Natural killer cell (primary cell): ENCODE measurements at regions of chr2 and their contacts with region 1.

Region 1: GRCh38 chr2:156332534-156333273 is at the start of gene NR4A2:
- DNase-seq: peak; percentile 89 to 98
- ATAC-seq: peak; percentile 53 to 80 (median 65)
- H3K4me3 ChIP-seq: peak within 1 kb of the TSS; percentile 91
- H3K4me3 Mint-ChIP-seq: peak within 1 kb of the TSS; percentile 99
- H3K27ac ChIP-seq: peak within 1 kb of the TSS; percentile 97
- H3K27ac Mint-ChIP-seq: peak within 1 kb of the TSS; percentile 99
- H3K4me1 ChIP-seq: peaks cover 44% of the 10 kb centered on the region
- H3K4me1 Mint-ChIP-seq: peaks cover 69 to 76% of the 10 kb centered on the region in 2 donors
- H3K27me3 ChIP-seq: peaks cover 29% of the 10 kb centered on the region
- H3K27me3 Mint-ChIP-seq: peaks cover 28 to 43% of the 10 kb centered on the region in 2 donors
- CTCF ChIP-seq: no peak
- total RNA-seq, gene NR4A2: 163 to 316 (median 266) TPM

Region 2: GRCh38 chr2:156400706-156401678 is 68.3 kb after region 1 on chr2:
- intact Hi-C with region 1: loop called (anchors 2 kb)
- DNase-seq: peak; percentile 77 to 94
- ATAC-seq: peak; percentile 79 to 85 (median 83)
- H3K4me3 ChIP-seq: peak overlapping the region; percentile 67
- H3K4me3 Mint-ChIP-seq: peak overlapping the region; percentile 99
- H3K27ac ChIP-seq: peak overlapping the region; percentile 97
- H3K27ac Mint-ChIP-seq: peak overlapping the region; percentile 99 to 100
- H3K4me1 ChIP-seq: peaks cover 6% of the 10 kb centered on the region
- H3K4me1 Mint-ChIP-seq: peaks cover 29 to 32% of the 10 kb centered on the region in 2 donors
- H3K27me3 ChIP-seq: no peaks in the 10 kb centered on the region
- H3K27me3 Mint-ChIP-seq: peaks cover 6 to 12% of the 10 kb centered on the region in 2 donors
- CTCF ChIP-seq: no peak

Region 3: DNA sequence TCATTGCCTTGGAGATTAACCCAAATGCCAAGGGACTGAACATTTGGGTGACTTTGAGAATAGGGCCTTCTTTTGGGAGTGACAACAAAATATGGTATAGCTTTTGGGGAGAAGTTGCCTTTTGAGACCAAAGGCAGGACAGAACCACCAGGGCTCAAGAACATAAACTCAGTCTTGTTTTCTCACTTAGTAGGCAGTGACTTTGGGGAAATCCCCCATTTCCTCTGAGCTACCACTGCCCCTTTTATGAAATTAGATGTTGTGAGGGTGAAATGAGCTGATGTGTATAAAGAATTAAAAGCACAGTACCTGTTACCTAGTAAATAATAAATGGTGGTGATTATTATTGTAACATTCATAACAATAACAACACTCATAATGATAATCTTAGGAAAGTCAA is 140.0 kb after region 1 on chr2:
- intact Hi-C with region 1: loop called (anchors 5 kb)
- DNase-seq: peak in 1 of 2 donors; percentile 58
- ATAC-seq: peak; percentile 89 to 95 (median 95)
- H3K4me3 ChIP-seq: no peak overlapping the region
- H3K4me3 Mint-ChIP-seq: peak overlapping the region; percentile 29
- H3K27ac ChIP-seq: no peak overlapping the region
- H3K27ac Mint-ChIP-seq: peak overlapping the region in 1 of 2 donors; percentile 43
- H3K4me1 ChIP-seq: peaks cover 11% of the 10 kb centered on the region
- H3K4me1 Mint-ChIP-seq: peaks cover 60 to 69% of the 10 kb centered on the region in 2 donors
- H3K27me3 ChIP-seq: no peaks in the 10 kb centered on the region
- H3K27me3 Mint-ChIP-seq: no peaks in the 10 kb centered on the region
- CTCF ChIP-seq: no peak

Region 4: GRCh38 chr2:156589381-156590079 is 256.8 kb after region 1 on chr2:
- intact Hi-C with region 1: loop called (anchors 2 kb)
- DNase-seq: peak in 1 of 2 donors; percentile 68
- ATAC-seq: peak in 2 of 3 donors; percentile 68 to 75
- H3K4me3 ChIP-seq: no peak overlapping the region
- H3K4me3 Mint-ChIP-seq: no peak overlapping the region
- H3K27ac ChIP-seq: no peak overlapping the region
- H3K27ac Mint-ChIP-seq: no peak overlapping the region
- H3K4me1 ChIP-seq: no peaks in the 10 kb centered on the region
- H3K4me1 Mint-ChIP-seq: no peaks in the 10 kb centered on the region
- H3K27me3 ChIP-seq: no peaks in the 10 kb centered on the region
- H3K27me3 Mint-ChIP-seq: no peaks in the 10 kb centered on the region
- CTCF ChIP-seq: peak; percentile 68

Region 5: GRCh38 chr2:157413326-157414035 is 1080.8 kb after region 1 on chr2:
- intact Hi-C with region 1: loop called (anchors 10 kb)
- DNase-seq: peak in 1 of 2 donors; percentile 86
- ATAC-seq: peak; percentile 71 to 90 (median 85)
- H3K4me3 ChIP-seq: no peak overlapping the region
- H3K4me3 Mint-ChIP-seq: peak overlapping the region; percentile 80
- H3K27ac ChIP-seq: peak overlapping the region; percentile 86
- H3K27ac Mint-ChIP-seq: peak overlapping the region; percentile 82 to 94
- H3K4me1 ChIP-seq: peaks cover 34% of the 10 kb centered on the region
- H3K4me1 Mint-ChIP-seq: peaks cover 76 to 91% of the 10 kb centered on the region in 2 donors
- H3K27me3 ChIP-seq: no peaks in the 10 kb centered on the region
- H3K27me3 Mint-ChIP-seq: no peaks in the 10 kb centered on the region
- CTCF ChIP-seq: no peak